HEK293 (cell line): ENCODE measurements at regions of chr11 and their contacts with region 1.

Region 1: DNA sequence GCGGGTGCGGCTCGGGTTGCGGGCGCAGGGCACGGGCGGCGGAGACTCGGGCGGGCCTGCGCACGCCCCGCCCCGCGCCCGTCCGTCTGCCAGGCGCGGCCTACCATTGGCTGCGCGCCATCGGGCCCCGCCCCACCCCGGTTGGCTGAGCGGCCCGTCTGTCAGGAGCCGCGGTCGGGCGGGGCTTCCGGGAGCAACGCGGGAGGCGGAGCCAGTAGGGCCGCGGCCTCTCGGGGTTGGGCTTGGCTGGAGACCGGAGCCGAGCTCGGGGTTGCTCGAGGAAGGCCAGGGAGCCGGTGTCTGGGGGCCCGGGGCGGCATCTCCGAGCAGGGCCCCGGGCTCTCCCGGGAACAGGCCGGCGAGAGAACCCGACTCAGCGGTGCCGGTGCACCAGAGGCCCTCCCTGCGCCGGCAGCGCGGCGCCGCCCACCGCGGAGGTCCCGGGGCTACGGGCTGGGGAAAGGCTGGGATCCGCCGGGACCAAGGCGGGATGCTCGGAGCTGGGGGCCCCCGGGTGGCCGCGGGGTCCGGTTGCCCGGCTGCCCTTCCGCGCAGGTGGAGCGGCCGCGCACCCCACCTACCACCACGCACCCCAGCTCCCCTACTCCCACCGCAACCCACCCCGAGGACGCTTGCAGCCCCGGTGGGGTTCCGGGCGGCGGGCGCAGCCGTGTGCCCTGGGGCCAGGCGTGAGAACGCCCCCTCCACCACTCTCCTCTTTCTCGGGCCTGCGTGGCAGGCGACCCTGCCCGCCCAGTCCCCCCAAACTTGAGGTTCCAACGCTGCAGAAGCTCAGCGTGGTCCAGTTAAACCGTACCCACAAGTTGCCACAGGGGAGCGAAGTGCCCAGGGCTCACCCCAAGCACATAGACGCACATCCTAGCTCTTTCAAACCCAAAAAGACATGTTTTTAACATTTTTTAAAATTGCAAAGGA is at the start of gene HRAS:
- H3K4me3 ChIP-seq: peak within 1 kb of the TSS; percentile 72
- H3K27ac ChIP-seq: peak within 1 kb of the TSS; percentile 83
- H3K4me1 ChIP-seq: no peaks in the 10 kb centered on the region
- CTCF ChIP-seq: no peak

Region 2: GRCh38 chr11:506238-506994 is 29.4 kb before region 1 on chr11:
- CTCF ChIA-PET with region 1: no interaction called
- POLR2A ChIA-PET with region 1: interaction called, 11 read pairs
- H3K4me3 ChIP-seq: peak overlapping the region; percentile 90
- H3K27ac ChIP-seq: peak overlapping the region; percentile 85
- H3K4me1 ChIP-seq: no peaks in the 10 kb centered on the region
- CTCF ChIP-seq: no peak; the same call in 1 of the 2 replicates

Region 3: GRCh38 chr11:629237-629583 is 93.4 kb after region 1 on chr11:
- CTCF ChIA-PET with region 1: no interaction called
- POLR2A ChIA-PET with region 1: no interaction called
- H3K4me3 ChIP-seq: no peak overlapping the region
- H3K27ac ChIP-seq: no peak overlapping the region
- H3K4me1 ChIP-seq: no peaks in the 10 kb centered on the region
- CTCF ChIP-seq: no peak